Mammary epithelial cell (primary cell): ENCODE measurements at regions of chr10 and their contacts with region 1.

Region 1: DNA sequence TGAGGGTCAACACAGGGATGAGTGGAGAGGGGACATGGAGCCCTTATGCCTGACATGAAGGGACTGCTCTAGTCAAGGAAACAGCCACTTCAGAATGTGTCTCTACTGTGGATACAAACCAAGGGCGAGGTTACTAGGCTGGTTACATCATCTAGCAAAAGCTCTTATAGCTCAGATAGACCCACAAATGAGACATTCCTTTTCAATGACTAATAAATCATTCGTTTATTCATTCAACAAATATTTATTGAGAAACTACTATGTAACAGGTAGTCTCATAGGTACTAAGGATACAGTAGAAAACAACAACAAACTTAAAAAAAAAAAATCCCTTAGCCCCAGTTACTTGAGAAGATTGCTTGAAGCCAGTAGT is 219.5 kb downstream of the KIAA1217 start:
- DNase-seq: peak; percentile 86
- H3K4me3 ChIP-seq: no peak overlapping the region
- H3K27ac ChIP-seq: peak overlapping the region; percentile 83
- H3K4me1 ChIP-seq: peaks cover 21% of the 10 kb centered on the region
- H3K27me3 ChIP-seq: no peaks in the 10 kb centered on the region
- CTCF ChIP-seq: no peak

Region 2: DNA sequence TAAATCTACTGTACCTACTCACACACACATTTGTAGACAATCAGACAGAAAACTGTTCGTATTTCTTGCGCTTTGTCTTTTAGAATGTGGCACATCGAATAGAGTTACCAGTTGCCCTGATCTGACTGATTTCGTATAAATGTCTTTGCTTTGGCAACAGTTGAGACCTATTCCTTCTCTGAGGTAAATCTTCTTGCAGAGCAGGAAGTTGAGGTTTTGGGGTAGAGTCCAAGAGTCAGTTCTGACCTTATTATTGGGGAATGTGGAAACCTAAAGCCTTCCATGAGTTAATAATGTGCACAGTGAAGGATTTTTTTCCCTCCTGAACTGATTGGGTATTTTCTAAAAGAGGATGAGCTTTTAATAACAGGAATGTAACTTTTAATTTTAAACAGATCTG is 84.1 kb before region 1 on chr10:
- CTCF ChIA-PET with region 1: no interaction called
- dilution Hi-C with region 1: no loop called
- in situ Hi-C with region 1: no loop called
- intact Hi-C with region 1: no loop called
- DNase-seq: peak; percentile 93
- H3K4me3 ChIP-seq: peak overlapping the region in 2 of 3 experiments; percentile 9 to 26
- H3K27ac ChIP-seq: peak overlapping the region; percentile 96
- H3K4me1 ChIP-seq: peaks cover 39% of the 10 kb centered on the region
- H3K27me3 ChIP-seq: no peaks in the 10 kb centered on the region
- CTCF ChIP-seq: no peak

Region 3: GRCh38 chr10:24383681-24384106 is 44.7 kb before region 1 on chr10:
- CTCF ChIA-PET with region 1: no interaction called
- dilution Hi-C with region 1: no loop called
- in situ Hi-C with region 1: no loop called
- intact Hi-C with region 1: loop called (anchors 1 kb)
- DNase-seq: peak; percentile 98
- H3K4me3 ChIP-seq: peak overlapping the region; percentile 28 to 39 (median 33)
- H3K27ac ChIP-seq: peak overlapping the region; percentile 100
- H3K4me1 ChIP-seq: peaks cover 42% of the 10 kb centered on the region
- H3K27me3 ChIP-seq: no peaks in the 10 kb centered on the region
- CTCF ChIP-seq: peak; percentile 43 to 68

Region 4: GRCh38 chr10:24457769-24458306 is 29.4 kb after region 1 on chr10:
- CTCF ChIA-PET with region 1: no interaction called
- dilution Hi-C with region 1: no loop called
- in situ Hi-C with region 1: no loop called
- intact Hi-C with region 1: loop called (anchors 1 kb)
- DNase-seq: peak; percentile 86
- H3K4me3 ChIP-seq: no peak overlapping the region
- H3K27ac ChIP-seq: peak overlapping the region; percentile 71
- H3K4me1 ChIP-seq: peaks cover 35% of the 10 kb centered on the region
- H3K27me3 ChIP-seq: no peaks in the 10 kb centered on the region
- CTCF ChIP-seq: no peak

Region 5: DNA sequence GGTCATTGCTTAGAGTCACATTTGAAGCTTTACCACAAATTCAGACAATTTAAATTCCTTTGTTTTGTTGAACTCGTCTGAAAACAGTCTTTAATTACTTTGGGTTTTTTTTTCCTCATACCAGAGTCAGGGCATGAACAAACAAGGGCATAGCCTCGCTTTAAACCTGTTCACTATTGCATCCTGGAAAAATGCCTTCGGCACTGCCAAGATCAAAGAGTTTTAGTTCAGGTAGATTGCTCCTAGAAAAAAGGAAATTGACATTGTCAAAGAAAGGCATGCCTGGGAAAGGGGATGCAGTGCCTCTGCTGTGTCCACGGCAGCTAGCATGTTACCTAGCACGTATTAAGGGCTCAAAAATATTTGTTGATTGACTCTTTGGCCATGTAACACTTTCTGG is 60.2 kb after region 1 on chr10:
- CTCF ChIA-PET with region 1: interaction called, 3 read pairs
- dilution Hi-C with region 1: no loop called
- in situ Hi-C with region 1: no loop called
- intact Hi-C with region 1: loop called (anchors 1 kb)
- DNase-seq: peak; percentile 34
- H3K4me3 ChIP-seq: no peak overlapping the region
- H3K27ac ChIP-seq: peak overlapping the region; percentile 17
- H3K4me1 ChIP-seq: peaks cover 40% of the 10 kb centered on the region
- H3K27me3 ChIP-seq: no peaks in the 10 kb centered on the region
- CTCF ChIP-seq: no peak